ENCODE measurements at regions of chr5 and their contacts with region 1.

Region 1: GRCh38 chr5:55959208-55959607 is 35.6 kb downstream of the IL6ST start:
- DNase-seq: no peak
- H3K4me3 ChIP-seq: no peak overlapping the region
- H3K27ac ChIP-seq: no peak overlapping the region
- H3K4me1 ChIP-seq: no peaks in the 10 kb centered on the region
- H3K27me3 ChIP-seq: no peaks in the 10 kb centered on the region
- CTCF ChIP-seq: no peak
- EP300 ChIP-seq: no peak
- POLR2A ChIP-seq: no peak

Region 2: GRCh38 chr5:55278778-55279177 is 680.4 kb before region 1 on chr5:
- intact Hi-C with region 1: loop called (anchors 10 kb)
- DNase-seq: no peak
- H3K4me3 ChIP-seq: no peak overlapping the region
- H3K27ac ChIP-seq: no peak overlapping the region
- H3K4me1 ChIP-seq: no peaks in the 10 kb centered on the region
- H3K27me3 ChIP-seq: no peaks in the 10 kb centered on the region
- CTCF ChIP-seq: no peak
- EP300 ChIP-seq: no peak
- POLR2A ChIP-seq: no peak

Region 3: GRCh38 chr5:55836191-55836590 is 123.0 kb before region 1 on chr5:
- intact Hi-C with region 1: no loop called
- DNase-seq: no peak
- H3K4me3 ChIP-seq: no peak overlapping the region
- H3K27ac ChIP-seq: no peak overlapping the region
- H3K4me1 ChIP-seq: no peaks in the 10 kb centered on the region
- H3K27me3 ChIP-seq: no peaks in the 10 kb centered on the region
- CTCF ChIP-seq: no peak
- EP300 ChIP-seq: no peak
- POLR2A ChIP-seq: no peak